CD14-positive monocyte (primary cell): ENCODE measurements at regions of chr11 and their contacts with region 1.

Region 1: DNA sequence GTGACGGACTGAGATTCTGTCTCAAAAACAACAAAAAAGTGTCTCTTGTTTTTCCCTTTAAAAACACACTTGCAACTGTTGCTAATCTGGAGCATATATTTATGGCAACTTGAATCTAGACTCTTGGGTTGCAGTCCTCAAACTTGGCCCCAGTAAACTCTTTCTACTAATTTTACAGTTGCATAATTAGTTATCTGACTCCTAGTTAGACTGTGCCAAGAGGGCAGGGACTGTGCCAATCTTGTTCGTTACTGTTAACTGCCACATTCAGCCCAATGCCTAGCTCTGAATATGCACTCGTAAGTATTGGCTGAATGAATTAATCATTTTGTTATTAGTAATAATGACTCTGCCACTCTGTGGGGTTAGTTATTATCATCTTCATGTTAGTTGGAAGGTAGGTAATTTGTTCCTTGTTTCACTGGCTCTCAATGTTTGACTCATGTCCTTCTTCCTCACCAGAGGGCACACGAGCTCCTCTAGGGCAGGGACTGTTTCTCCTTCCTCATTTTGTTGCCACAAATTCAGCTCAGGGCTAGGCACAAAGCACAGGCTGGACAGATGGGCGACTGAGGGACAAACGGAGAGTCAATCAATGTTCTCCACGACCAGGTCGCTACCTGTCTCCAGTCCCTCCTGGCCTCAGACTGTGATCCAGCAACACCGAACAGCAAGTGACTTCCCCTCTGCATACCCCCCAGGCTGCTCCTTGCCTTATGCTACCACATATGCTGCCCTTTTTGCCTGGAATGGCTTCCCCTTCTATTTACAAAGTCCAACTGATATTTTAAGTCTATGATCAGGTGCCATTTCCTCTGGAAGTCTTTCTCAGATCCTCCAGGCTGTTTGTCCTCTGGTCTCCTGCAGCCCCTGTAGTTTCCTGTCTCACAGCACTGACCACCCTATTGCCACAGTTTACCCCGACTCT is 9.0 kb downstream of the CLPB start:
- DNase-seq: peak; percentile 58 to 75 (median 64)
- H3K4me3 ChIP-seq: no peak overlapping the region
- H3K4me3 Mint-ChIP-seq: no peak overlapping the region
- H3K27ac ChIP-seq: peak overlapping the region; percentile 23 to 64
- H3K27ac Mint-ChIP-seq: peak overlapping the region; percentile 73 to 86 (median 80)
- H3K4me1 ChIP-seq: peaks cover 16 to 18% of the 10 kb centered on the region in 2 donors
- H3K4me1 Mint-ChIP-seq: peaks cover 34% of the 10 kb centered on the region
- H3K27me3 ChIP-seq: no peaks in the 10 kb centered on the region
- H3K27me3 Mint-ChIP-seq: peaks cover 0 to 3% (median 0%) of the 10 kb centered on the region in 3 donors
- CTCF ChIP-seq: peak; percentile 43

Region 2: GRCh38 chr11:72293910-72294615 is 131.3 kb before region 1 on chr11:
- intact Hi-C with region 1: loop called in 1 of 2 experiments (anchors 10 kb)
- DNase-seq: no peak
- H3K4me3 ChIP-seq: no peak overlapping the region
- H3K4me3 Mint-ChIP-seq: no peak overlapping the region
- H3K27ac ChIP-seq: peak overlapping the region in 1 of 2 donors; percentile 36
- H3K27ac Mint-ChIP-seq: peak overlapping the region in 3 of 7 donors; percentile 2 to 71 (median 50)
- H3K4me1 ChIP-seq: no peaks in the 10 kb centered on the region
- H3K4me1 Mint-ChIP-seq: peaks cover 3% of the 10 kb centered on the region
- H3K27me3 ChIP-seq: no peaks in the 10 kb centered on the region
- H3K27me3 Mint-ChIP-seq: peaks cover 0 to 2% (median 0%) of the 10 kb centered on the region in 3 donors
- CTCF ChIP-seq: no peak